CD14-positive monocyte (primary cell): ENCODE measurements at regions of chr1 and their contacts with region 1.

Region 1: GRCh38 chr1:10494754-10495474 is 20.2 kb downstream of the PEX14 start:
- DNase-seq: peak; percentile 53 to 64 (median 54)
- H3K4me3 ChIP-seq: peak overlapping the region; percentile 39 to 71 (median 39)
- H3K4me3 Mint-ChIP-seq: peak overlapping the region; percentile 76 to 89
- H3K27ac ChIP-seq: peak overlapping the region in 1 of 2 donors; percentile 72
- H3K27ac Mint-ChIP-seq: peak overlapping the region; percentile 34 to 90 (median 75)
- H3K4me1 ChIP-seq: peaks cover 9 to 15% of the 10 kb centered on the region in 2 donors
- H3K4me1 Mint-ChIP-seq: peaks cover 14% of the 10 kb centered on the region
- H3K27me3 ChIP-seq: no peaks in the 10 kb centered on the region
- H3K27me3 Mint-ChIP-seq: peaks cover 0 to 2% (median 0%) of the 10 kb centered on the region in 3 donors
- CTCF ChIP-seq: peak; percentile 99

Region 2: GRCh38 chr1:10378081-10378841 is 116.7 kb before region 1 on chr1:
- intact Hi-C with region 1: loop called (anchors 5 kb)
- DNase-seq: peak; percentile 82 to 90 (median 87)
- H3K4me3 ChIP-seq: peak overlapping the region in 1 of 3 experiments; percentile 15
- H3K4me3 Mint-ChIP-seq: peak overlapping the region in 1 of 2 donors; percentile 27
- H3K27ac ChIP-seq: peak overlapping the region; percentile 71 to 78
- H3K27ac Mint-ChIP-seq: peak overlapping the region; percentile 84 to 95 (median 93)
- H3K4me1 ChIP-seq: peaks cover 22 to 32% of the 10 kb centered on the region in 2 donors
- H3K4me1 Mint-ChIP-seq: peaks cover 36% of the 10 kb centered on the region
- H3K27me3 ChIP-seq: no peaks in the 10 kb centered on the region
- H3K27me3 Mint-ChIP-seq: peaks cover 0 to 2% (median 2%) of the 10 kb centered on the region in 3 donors
- CTCF ChIP-seq: no peak